Activated CD8-positive, alpha-beta T cell treated with anti-CD3 and anti-CD28 coated beads, Interleukin-2, amount 10 ng/mL, durations not matched to agents 7 days and 5 days (primary cell): ENCODE measurements at regions of chr2 and their contacts with region 1.

Region 1: GRCh38 chr2:68295516-68295915 is 24.2 kb downstream of the CNRIP1 start:
- DNase-seq: no peak
- ATAC-seq: no peak
- H3K4me3 Mint-ChIP-seq: no peak overlapping the region
- H3K27ac Mint-ChIP-seq: no peak overlapping the region
- H3K4me1 Mint-ChIP-seq: peaks cover 7% of the 10 kb centered on the region
- H3K27me3 Mint-ChIP-seq: peaks cover 5% of the 10 kb centered on the region

Region 2: DNA sequence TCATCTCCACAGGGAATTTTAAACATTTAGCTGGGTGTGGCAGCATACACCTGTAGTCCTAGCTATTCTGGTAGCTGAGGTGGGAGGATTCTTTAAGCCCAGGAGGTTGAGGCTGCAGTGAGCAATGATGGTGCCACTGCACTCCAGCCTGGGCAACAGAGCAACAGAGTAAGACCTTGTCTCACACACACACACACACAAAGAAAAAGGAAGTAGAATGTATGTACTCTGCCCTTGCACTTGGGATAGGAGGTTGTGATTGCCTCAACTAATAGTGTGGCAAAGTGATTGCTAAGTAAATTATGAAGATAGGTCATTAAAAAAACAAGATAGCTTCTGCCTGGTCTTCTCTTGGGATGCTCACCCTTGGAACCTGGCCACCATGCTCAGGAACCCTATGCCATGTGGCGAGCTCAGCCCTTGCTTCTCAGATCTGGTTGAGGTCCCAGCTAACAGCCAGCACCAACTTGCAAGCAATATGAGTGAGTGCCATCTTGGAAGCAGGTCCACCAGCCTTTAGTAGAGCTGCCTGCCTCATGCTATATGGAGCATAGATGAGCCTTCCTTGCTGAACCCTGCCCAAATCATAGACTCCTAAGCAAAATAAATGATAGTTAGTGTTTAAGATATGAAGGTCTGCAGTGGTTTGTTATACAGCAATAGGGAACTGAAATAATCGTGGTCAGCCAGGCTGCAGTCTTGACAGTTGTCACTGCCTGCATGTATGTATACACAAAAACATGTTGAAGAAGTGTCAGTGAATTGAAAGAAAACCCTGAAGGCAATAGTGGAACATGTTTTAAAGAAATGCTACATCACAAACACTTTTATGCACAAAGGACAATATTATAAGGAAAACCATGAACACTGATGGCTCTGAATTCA is 167.9 kb before region 1 on chr2:
- CTCF ChIA-PET with region 1: interaction called, 26 read pairs
- POLR2A ChIA-PET with region 1: no interaction called
- DNase-seq: no peak
- ATAC-seq: no peak
- H3K4me3 Mint-ChIP-seq: no peak overlapping the region
- H3K27ac Mint-ChIP-seq: no peak overlapping the region
- H3K4me1 Mint-ChIP-seq: peaks cover under 1% of the 10 kb centered on the region
- H3K27me3 Mint-ChIP-seq: no peaks in the 10 kb centered on the region

Region 3: GRCh38 chr2:68238955-68239822 is 56.3 kb before region 1 on chr2:
- CTCF ChIA-PET with region 1: no interaction called
- POLR2A ChIA-PET with region 1: no interaction called
- DNase-seq: no peak
- ATAC-seq: no peak
- H3K4me3 Mint-ChIP-seq: no peak overlapping the region
- H3K27ac Mint-ChIP-seq: no peak overlapping the region
- H3K4me1 Mint-ChIP-seq: peaks cover 39% of the 10 kb centered on the region
- H3K27me3 Mint-ChIP-seq: no peaks in the 10 kb centered on the region

Region 4: DNA sequence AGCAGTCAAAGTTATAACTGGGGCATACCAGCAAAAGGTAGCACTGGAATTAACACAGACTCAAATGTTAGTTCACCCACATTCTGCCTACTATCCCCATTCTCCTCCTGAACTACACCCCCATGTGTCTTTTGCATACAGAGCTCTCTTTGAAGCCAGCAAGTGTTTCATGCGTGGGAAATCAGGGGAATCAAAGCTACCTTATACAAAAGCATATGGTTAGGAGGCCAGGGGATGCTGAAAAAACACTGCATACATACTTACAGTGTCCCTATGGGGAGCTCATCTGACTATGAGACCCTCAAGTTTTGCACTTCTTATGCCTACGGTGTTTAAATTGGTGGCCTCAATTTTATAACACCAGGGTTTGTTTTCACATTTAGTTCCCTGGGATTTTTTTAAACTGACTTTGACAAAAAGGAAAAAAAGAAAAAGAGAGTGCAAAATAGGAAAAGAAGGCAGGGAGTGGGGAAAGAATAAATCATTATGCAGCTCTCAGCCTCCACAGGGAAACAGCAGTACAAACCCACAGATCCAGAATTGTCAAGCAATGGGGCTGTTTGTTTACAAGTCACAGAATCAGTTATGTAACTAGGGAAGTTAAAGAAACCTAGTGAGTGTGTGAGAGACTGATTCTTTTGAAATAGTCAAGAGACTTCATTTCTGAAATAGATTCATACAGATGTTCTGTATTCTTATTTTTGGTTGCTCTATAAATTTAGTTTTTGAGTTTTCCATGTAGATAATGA is 23.1 kb before region 1 on chr2:
- CTCF ChIA-PET with region 1: no interaction called
- POLR2A ChIA-PET with region 1: no interaction called
- DNase-seq: no peak
- ATAC-seq: no peak
- H3K4me3 Mint-ChIP-seq: no peak overlapping the region
- H3K27ac Mint-ChIP-seq: no peak overlapping the region
- H3K4me1 Mint-ChIP-seq: no peaks in the 10 kb centered on the region
- H3K27me3 Mint-ChIP-seq: peaks cover 34% of the 10 kb centered on the region

Region 5: DNA sequence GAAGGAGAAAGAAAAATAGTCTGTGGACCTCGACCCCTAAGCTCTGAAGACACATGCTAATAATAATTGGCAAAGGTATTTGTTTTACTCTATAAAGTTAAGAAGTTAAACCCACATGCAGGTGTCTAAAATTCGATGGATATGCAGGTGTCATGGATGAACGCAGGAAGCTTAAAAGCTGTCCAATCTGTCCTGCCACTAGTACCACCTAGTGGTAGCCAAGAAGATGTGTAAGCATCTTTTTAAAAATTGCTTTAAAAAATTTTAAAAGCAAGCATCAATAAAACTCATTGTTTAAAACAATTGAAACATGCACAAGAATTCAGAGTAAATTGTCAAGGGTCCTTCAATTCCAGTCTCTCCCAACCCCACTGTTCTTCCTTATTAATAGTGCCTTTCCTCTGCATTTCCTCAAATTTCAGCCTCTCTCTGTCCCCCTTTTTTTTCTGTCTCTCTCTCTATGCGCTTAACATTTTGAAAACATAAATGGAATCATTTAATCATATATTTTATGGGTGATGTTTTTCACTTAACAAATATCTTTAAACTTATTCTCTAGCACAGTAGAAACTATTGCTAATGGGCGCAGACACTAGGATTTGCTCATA is 12.6 kb before region 1 on chr2:
- CTCF ChIA-PET with region 1: interaction called, 30 read pairs
- POLR2A ChIA-PET with region 1: no interaction called
- DNase-seq: peak; percentile 27
- ATAC-seq: no peak
- H3K4me3 Mint-ChIP-seq: no peak overlapping the region
- H3K27ac Mint-ChIP-seq: no peak overlapping the region
- H3K4me1 Mint-ChIP-seq: no peaks in the 10 kb centered on the region
- H3K27me3 Mint-ChIP-seq: peaks cover 52% of the 10 kb centered on the region